ENCODE measurements at regions of chr2 and their contacts with region 1.

Region 1: GRCh38 chr2:18560031-18560796 is at the start of gene RDH14:
- DNase-seq: peak; percentile 87 to 98
- H3K4me3 ChIP-seq: peak within 1 kb of the TSS; percentile 78 to 90
- H3K27ac ChIP-seq: peak within 1 kb of the TSS; percentile 93 to 95
- H3K4me1 ChIP-seq: peaks cover 5 to 25% of the 10 kb centered on the region in 2 donors
- H3K27me3 ChIP-seq: no peaks in the 10 kb centered on the region
- CTCF ChIP-seq: no peak
- total RNA-seq, gene RDH14: 51.2 TPM

Region 2: GRCh38 chr2:19901442-19902215 is 1341.4 kb after region 1 on chr2 and contains the start of gene TTC32:
- intact Hi-C with region 1: loop called (anchors 5 kb)
- DNase-seq: peak; percentile 70 to 96
- H3K4me3 ChIP-seq: peak within 1 kb of the TSS; percentile 79 to 91
- H3K27ac ChIP-seq: peak within 1 kb of the TSS; percentile 84 to 91
- H3K4me1 ChIP-seq: peaks cover 0 to 28% of the 10 kb centered on the region in 2 donors
- H3K27me3 ChIP-seq: no peaks in the 10 kb centered on the region
- CTCF ChIP-seq: no peak
- total RNA-seq, gene TTC32: not detected

Measured in ascending aorta (tissue), 2 donors.